ENCODE measurements at regions of chr12 and their contacts with region 1.

Region 1: GRCh38 chr12:2004113-2004929 is at the start of gene DCP1B:
- DNase-seq: peak; percentile 74 to 95
- H3K4me3 ChIP-seq: peak within 1 kb of the TSS; percentile 60
- H3K27ac ChIP-seq: no peak within 1 kb of the TSS
- H3K4me1 ChIP-seq: no peaks in the 10 kb centered on the region
- H3K27me3 ChIP-seq: peaks cover 14% of the 10 kb centered on the region
- CTCF ChIP-seq: no peak
- total RNA-seq, gene DCP1B: 6.2 and 6.8 TPM in 2 replicates

Region 2: DNA sequence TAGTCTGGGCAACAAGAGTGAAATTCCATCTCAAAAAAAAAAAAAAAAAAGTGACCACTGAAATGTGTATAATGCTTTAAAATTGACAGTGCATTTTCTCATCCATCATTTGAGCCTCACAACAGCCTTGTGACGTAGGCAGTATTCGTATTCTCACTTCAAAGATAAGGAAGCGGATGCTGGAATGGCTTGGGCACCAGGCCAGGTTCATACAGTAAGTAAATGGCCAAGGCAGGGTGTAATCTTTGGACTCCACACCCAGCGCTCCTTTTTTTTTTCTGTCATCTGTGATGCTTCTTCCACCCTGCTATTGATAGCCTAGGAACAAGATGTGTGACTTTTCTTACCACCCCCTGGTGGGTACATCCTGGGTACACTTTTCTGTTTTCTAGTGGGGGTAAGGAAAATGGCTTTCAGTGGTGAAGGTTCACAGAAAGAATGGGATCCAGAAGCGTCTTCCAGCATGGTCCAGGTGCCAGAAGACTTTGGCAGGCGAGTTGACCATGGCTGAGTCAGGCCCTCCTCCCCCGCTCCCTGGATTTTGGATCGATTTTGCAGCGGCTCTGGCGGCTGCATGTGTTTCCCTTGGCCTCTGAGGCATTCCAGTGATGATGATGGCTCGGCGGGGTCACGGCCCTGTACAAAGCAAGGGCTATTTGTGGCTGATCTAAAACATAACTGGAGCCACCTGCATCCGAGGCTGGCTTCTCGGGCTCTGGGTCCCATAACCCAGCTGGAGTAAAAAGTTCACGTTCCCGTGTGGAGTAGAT is 159.0 kb after region 1 on chr12:
- CTCF ChIA-PET with region 1: no interaction called
- POLR2A ChIA-PET with region 1: no interaction called
- intact Hi-C with region 1: no loop called
- DNase-seq: no peak
- H3K4me3 ChIP-seq: no peak overlapping the region
- H3K27ac ChIP-seq: no peak overlapping the region
- H3K4me1 ChIP-seq: no peaks in the 10 kb centered on the region
- H3K27me3 ChIP-seq: peaks cover 73% of the 10 kb centered on the region
- CTCF ChIP-seq: no peak

Region 3: GRCh38 chr12:2194060-2194459 is 189.7 kb after region 1 on chr12:
- CTCF ChIA-PET with region 1: no interaction called
- POLR2A ChIA-PET with region 1: interaction called, 24 read pairs
- intact Hi-C with region 1: no loop called
- DNase-seq: no peak
- H3K4me3 ChIP-seq: no peak overlapping the region
- H3K27ac ChIP-seq: no peak overlapping the region
- H3K4me1 ChIP-seq: no peaks in the 10 kb centered on the region
- H3K27me3 ChIP-seq: peaks cover 95% of the 10 kb centered on the region
- CTCF ChIP-seq: no peak